HAP-1 (cell line): ENCODE measurements at regions of chr3 and their contacts with region 1.

Region 1: GRCh38 chr3:113838631-113839209 is at the start of gene GRAMD1C:
- DNase-seq: peak; percentile 89 to 90
- H3K4me3 ChIP-seq: peak within 1 kb of the TSS; percentile 39
- H3K4me1 ChIP-seq: peaks cover 9% of the 10 kb centered on the region
- H3K27me3 ChIP-seq: no peaks in the 10 kb centered on the region

Region 2: DNA sequence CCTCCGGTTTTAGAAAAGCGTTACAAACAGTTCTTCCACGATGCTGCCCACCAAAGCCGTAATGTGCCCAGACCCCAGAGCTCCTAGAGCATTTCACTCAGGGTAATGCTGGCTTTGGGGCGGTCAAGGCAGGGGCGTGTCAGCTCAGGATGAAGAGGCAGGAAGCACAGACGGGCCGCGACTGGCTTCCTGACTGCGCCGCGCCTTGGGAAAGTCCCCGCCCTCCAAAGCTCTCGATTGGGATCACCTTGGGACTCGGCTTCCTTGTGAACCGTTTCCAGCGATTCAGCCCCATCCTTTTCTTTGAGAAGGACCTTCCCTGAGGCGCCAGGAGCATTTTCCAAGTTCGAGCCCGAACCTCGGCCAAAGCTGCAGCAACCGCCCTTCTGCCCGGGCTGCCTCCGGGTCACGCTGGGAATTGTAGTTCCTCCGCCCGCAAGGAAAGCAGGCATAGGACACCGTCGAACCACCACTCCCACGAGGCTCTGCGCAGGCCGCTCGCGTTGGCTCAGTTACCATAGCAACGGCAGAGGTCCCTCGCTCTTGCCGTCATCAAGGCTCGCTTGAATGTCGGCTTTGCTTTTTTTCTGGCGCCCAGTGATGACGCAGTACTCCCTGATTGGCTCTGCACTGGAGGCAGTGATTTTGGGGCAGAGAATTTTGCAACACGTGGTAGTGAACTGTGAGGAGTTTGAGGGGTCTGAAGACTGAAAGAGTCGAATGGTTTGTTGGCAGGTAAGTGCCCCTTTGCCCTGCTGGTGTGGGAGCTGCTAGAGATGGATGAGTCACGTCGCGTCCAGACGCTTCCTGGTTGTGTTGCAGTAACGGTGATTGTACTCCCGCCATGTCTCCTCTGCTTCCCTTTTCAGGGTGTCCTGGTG is 217.7 kb after region 1 on chr3 and contains the starts of genes CCDC191 and QTRT2:
- in situ Hi-C with region 1: loop called (anchors 25 kb)
- DNase-seq: peak; percentile 98 to 100
- H3K4me3 ChIP-seq: peak within 1 kb of the TSS; percentile 70
- H3K4me1 ChIP-seq: peaks cover 6% of the 10 kb centered on the region; the same call in 1 of the 2 replicates
- H3K27me3 ChIP-seq: no peaks in the 10 kb centered on the region